Caco-2 (cell line): ENCODE measurements at regions of chr3 and their contacts with region 1.

Region 1: GRCh38 chr3:118544458-118544857 is 490.2 kb downstream of the IGSF11 start:
- DNase-seq: no peak
- H3K4me3 ChIP-seq: no peak overlapping the region
- H3K4me3 Mint-ChIP-seq: no peak overlapping the region
- H3K27ac Mint-ChIP-seq: peak overlapping the region; percentile 22
- H3K4me1 ChIP-seq: peaks cover 34% of the 10 kb centered on the region
- H3K4me1 Mint-ChIP-seq: peaks cover 48% of the 10 kb centered on the region
- H3K27me3 ChIP-seq: no peaks in the 10 kb centered on the region
- H3K27me3 Mint-ChIP-seq: no peaks in the 10 kb centered on the region
- CTCF ChIP-seq: no peak

Region 2: GRCh38 chr3:118557513-118558257 is 13.2 kb after region 1 on chr3:
- CTCF ChIA-PET with region 1: no interaction called
- POLR2A ChIA-PET with region 1: no interaction called
- intact Hi-C with region 1: loop called (anchors 1 kb)
- DNase-seq: peak in 1 of 2 experiments; percentile 16
- H3K4me3 ChIP-seq: no peak overlapping the region
- H3K4me3 Mint-ChIP-seq: peak overlapping the region; percentile 0
- H3K27ac Mint-ChIP-seq: peak overlapping the region; percentile 4
- H3K4me1 ChIP-seq: peaks cover 21% of the 10 kb centered on the region
- H3K4me1 Mint-ChIP-seq: peaks cover 15% of the 10 kb centered on the region
- H3K27me3 ChIP-seq: no peaks in the 10 kb centered on the region
- H3K27me3 Mint-ChIP-seq: no peaks in the 10 kb centered on the region
- CTCF ChIP-seq: no peak

Region 3: DNA sequence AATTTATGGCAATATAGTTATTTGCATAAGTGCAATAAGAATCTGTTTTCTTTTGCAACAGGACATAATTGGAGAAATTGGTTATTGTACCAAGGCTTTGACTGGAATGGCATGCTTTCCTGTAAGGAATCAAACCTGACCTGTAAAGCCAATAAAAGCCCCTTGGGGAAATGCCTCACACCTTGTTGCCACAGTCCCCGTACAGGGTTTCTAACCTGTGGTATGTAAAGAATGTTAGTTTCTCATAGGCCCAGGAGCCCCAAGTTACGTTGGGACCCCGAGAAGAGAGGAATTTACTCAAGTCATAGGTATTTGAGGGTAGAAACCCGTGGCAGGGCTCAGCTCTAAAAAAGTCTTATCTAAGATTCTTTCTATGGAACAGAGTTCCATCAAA is 48.8 kb after region 1 on chr3:
- CTCF ChIA-PET with region 1: no interaction called
- POLR2A ChIA-PET with region 1: no interaction called
- intact Hi-C with region 1: loop called (anchors 1 kb)
- DNase-seq: peak; percentile 62 to 80
- H3K4me3 ChIP-seq: no peak overlapping the region
- H3K4me3 Mint-ChIP-seq: no peak overlapping the region
- H3K27ac Mint-ChIP-seq: peak overlapping the region; percentile 64
- H3K4me1 ChIP-seq: peaks cover 35% of the 10 kb centered on the region
- H3K4me1 Mint-ChIP-seq: peaks cover 5% of the 10 kb centered on the region
- H3K27me3 ChIP-seq: no peaks in the 10 kb centered on the region
- H3K27me3 Mint-ChIP-seq: no peaks in the 10 kb centered on the region
- CTCF ChIP-seq: no peak

Region 4: GRCh38 chr3:118618247-118619040 is 74.0 kb after region 1 on chr3:
- CTCF ChIA-PET with region 1: no interaction called
- POLR2A ChIA-PET with region 1: interaction called, 10 read pairs
- intact Hi-C with region 1: no loop called
- DNase-seq: no peak
- H3K4me3 ChIP-seq: no peak overlapping the region
- H3K4me3 Mint-ChIP-seq: no peak overlapping the region
- H3K27ac Mint-ChIP-seq: no peak overlapping the region
- H3K4me1 ChIP-seq: no peaks in the 10 kb centered on the region
- H3K4me1 Mint-ChIP-seq: no peaks in the 10 kb centered on the region
- H3K27me3 ChIP-seq: no peaks in the 10 kb centered on the region
- H3K27me3 Mint-ChIP-seq: no peaks in the 10 kb centered on the region
- CTCF ChIP-seq: no peak

Region 5: DNA sequence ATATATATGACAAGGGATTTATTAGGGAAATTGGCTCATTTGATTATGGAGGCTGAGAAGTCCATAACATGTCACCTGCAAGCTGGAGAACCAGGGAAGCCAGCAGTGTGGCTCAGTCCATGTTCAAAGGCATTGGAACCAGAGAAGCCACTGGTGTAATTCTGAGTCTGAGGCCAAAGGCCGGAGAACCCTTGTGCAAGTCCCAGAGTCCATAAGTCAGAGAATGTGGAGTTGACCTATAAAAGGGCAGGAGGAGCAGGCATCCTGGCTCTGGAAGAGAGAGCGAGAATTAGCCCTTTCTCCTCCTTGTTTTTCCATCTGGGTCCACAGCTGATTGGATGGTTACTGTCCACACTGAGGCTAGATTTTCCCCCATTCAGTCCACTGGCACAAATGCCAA is 170.3 kb after region 1 on chr3:
- CTCF ChIA-PET with region 1: no interaction called
- POLR2A ChIA-PET with region 1: no interaction called
- intact Hi-C with region 1: loop called (anchors 1 kb)
- DNase-seq: no peak
- H3K4me3 ChIP-seq: no peak overlapping the region
- H3K4me3 Mint-ChIP-seq: no peak overlapping the region
- H3K27ac Mint-ChIP-seq: no peak overlapping the region
- H3K4me1 ChIP-seq: peaks cover 17% of the 10 kb centered on the region
- H3K4me1 Mint-ChIP-seq: peaks cover 15% of the 10 kb centered on the region
- H3K27me3 ChIP-seq: no peaks in the 10 kb centered on the region
- H3K27me3 Mint-ChIP-seq: no peaks in the 10 kb centered on the region
- CTCF ChIP-seq: no peak